ENCODE measurements at regions of chr1 and their contacts with region 1.

Region 1: DNA sequence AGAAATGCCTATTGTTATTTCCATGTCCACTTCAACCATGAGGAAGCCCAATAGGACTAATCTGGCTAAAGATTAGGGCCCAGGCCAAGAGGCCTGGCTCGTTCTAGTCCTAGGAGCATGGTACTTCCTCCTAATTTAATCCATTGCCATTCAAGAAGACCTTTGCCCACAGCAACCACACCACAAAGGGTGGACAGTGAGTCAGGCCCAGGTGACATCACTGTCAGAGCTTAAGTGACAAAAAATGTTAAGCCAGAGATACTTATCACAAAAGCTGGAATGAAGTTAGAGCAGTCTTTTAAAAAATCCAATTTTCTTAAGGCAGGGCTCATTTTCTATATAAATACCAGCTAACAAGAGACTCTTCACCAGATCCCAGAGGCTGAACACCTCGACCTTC is at the start of gene SPRR3:
- DNase-seq: no peak
- total RNA-seq, gene SPRR3: not detected

Region 2: GRCh38 chr1:152917794-152918193 is 83.6 kb before region 1 on chr1:
- intact Hi-C with region 1: no loop called
- DNase-seq: no peak

Region 3: DNA sequence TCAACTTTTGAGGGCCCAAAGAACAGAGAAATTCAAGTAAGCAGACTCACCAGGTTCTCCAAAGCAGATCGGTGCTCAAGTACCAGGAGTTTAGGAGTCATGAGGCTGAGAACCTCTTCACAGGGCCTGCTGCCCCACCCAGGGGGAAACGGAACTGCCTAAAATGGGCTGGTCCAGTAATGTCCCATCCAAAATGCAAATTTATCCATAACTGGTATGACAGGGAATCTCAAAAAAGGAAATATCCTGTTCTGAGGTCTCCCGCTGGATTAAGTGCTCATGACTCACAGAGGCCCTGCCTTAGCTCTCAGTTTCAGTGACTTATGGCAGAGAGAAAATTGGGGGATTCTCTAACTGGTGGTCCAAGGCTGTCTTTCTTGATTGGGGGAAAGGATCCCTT is 140.0 kb after region 1 on chr1:
- intact Hi-C with region 1: loop called in 1 of 2 experiments (anchors 5 kb)
- DNase-seq: no peak

Region 4: DNA sequence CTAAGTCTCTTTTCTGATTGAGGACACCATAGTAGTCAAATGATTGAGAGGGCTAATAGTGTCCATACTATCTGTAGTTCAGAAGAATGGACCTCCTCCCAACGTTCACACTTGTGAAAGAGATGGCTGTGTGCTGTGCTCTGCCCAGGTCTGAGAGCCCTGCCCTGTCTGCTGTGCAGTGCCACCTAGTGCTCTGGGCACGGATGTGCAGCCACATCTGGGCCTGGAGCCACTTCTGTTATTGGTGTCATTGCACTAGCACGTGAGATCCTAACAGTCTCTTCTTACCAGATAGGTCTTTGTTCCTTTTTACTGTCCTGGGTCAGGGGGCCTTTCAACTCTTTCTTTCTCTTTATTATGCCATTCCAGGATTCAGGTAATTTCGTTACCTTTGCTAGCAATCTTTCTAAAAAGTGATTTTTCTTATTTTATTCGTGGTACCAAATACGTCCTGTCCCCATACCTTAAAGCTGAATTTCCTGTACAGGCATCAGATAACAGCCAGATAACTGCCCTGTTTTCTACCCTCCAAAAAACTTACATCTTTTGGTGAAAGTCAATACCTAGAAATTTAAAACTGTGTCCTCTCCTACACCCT is 748.1 kb after region 1 on chr1:
- intact Hi-C with region 1: no loop called
- DNase-seq: peak; percentile 96

Measured in posterior vena cava (tissue), 2 donors.